Panc1 (cell line): ENCODE measurements at regions of chr16 and their contacts with region 1.

Region 1: GRCh38 chr16:71542377-71542776 is 16.2 kb downstream of the CHST4 start:
- DNase-seq: peak; percentile 25
- ATAC-seq: peak; percentile 93
- H3K4me3 ChIP-seq: no peak overlapping the region
- H3K27ac ChIP-seq: no peak overlapping the region
- H3K4me1 ChIP-seq: no peaks in the 10 kb centered on the region
- H3K27me3 ChIP-seq: no peaks in the 10 kb centered on the region; the same call in 1 of the 2 replicates
- CTCF ChIP-seq: peak; percentile 81

Region 2: DNA sequence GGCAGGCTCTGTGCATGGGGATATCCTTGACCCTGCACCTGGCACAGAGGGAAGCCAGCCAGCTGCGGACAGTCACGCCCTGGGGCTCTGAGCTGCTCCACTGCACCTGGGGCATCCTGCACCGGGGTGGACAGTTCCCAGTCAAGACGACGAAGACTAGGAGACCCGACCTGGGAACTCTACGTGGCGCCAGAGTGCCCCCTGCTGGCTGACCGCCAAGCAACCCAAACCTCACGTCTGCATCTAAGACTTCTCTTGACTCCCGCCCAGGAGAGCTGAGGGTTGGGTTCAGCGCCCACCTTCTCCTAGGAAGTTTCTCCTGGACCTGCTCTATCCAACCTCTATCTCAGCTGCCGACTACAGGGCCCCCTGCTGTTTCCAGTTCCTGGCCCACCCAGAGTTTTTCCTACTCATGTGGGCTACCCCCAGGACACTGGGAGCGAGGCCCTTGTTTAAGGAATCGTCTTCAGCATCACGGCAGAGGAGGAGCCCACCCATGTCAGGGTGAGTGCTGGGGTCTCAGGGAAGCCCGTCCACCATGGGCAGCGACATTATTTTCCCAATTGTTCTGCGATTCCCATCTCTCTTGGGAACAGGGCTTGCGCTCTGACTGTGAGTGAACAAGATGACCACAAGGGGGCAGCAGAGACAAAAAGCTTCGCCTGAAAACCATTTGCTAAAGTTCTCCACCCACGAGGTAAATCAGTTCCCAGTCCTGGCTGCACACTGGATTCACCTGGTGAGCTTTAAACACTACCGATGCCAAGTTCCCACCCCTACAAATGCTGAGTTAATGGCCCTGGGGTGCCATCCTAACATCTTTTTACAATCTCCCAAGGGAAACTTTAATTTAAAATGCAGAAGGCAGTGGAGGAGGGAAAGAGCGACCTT is 129.9 kb before region 1 on chr16:
- CTCF ChIA-PET with region 1: no interaction called
- POLR2A ChIA-PET with region 1: no interaction called
- in situ Hi-C with region 1: no loop called
- intact Hi-C with region 1: loop called (anchors 5 kb)
- DNase-seq: peak; percentile 50
- ATAC-seq: peak; percentile 92
- H3K4me3 ChIP-seq: peak overlapping the region in 1 of 2 experiments; percentile 20; a peak in 1 of 4 replicates
- H3K27ac ChIP-seq: no peak overlapping the region
- H3K4me1 ChIP-seq: no peaks in the 10 kb centered on the region; the same call in 1 of the 2 replicates
- H3K27me3 ChIP-seq: no peaks in the 10 kb centered on the region; the same call in 1 of the 2 replicates
- CTCF ChIP-seq: peak; percentile 85

Region 3: DNA sequence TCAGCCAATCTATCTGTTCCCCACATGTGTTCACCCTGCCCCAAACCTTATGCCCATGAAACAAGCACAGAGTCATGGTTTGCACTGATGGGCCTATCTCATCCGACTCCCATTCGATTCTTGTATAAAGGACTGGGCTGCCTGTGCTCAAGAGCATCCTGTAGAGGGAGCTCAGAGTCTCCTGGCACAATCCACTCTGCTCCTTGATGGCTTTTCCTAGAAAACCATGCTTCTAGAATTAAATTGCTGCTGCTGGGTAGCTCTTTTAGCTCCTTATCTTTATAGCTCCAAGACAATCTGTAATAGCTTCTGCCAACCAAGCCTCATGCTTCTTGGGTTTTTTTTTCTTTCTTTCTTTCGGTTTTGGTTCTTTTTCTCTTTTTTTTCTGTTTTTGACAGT is 63.0 kb before region 1 on chr16:
- CTCF ChIA-PET with region 1: no interaction called
- POLR2A ChIA-PET with region 1: no interaction called
- in situ Hi-C with region 1: no loop called
- intact Hi-C with region 1: no loop called
- DNase-seq: no peak
- ATAC-seq: peak; percentile 69; the same call in 1 of the 2 replicates
- H3K4me3 ChIP-seq: no peak overlapping the region
- H3K27ac ChIP-seq: no peak overlapping the region
- H3K4me1 ChIP-seq: no peaks in the 10 kb centered on the region
- H3K27me3 ChIP-seq: no peaks in the 10 kb centered on the region
- CTCF ChIP-seq: peak; percentile 66

Region 4: GRCh38 chr16:71600822-71601221 is 58.4 kb after region 1 on chr16:
- CTCF ChIA-PET with region 1: no interaction called
- POLR2A ChIA-PET with region 1: no interaction called
- in situ Hi-C with region 1: no loop called
- intact Hi-C with region 1: loop called (anchors 5 kb)
- DNase-seq: no peak
- ATAC-seq: no peak
- H3K4me3 ChIP-seq: no peak overlapping the region
- H3K27ac ChIP-seq: no peak overlapping the region
- H3K4me1 ChIP-seq: no peaks in the 10 kb centered on the region
- H3K27me3 ChIP-seq: no peaks in the 10 kb centered on the region
- CTCF ChIP-seq: no peak